ENCODE measurements at regions of chr12 and their contacts with region 1.

Region 1: DNA sequence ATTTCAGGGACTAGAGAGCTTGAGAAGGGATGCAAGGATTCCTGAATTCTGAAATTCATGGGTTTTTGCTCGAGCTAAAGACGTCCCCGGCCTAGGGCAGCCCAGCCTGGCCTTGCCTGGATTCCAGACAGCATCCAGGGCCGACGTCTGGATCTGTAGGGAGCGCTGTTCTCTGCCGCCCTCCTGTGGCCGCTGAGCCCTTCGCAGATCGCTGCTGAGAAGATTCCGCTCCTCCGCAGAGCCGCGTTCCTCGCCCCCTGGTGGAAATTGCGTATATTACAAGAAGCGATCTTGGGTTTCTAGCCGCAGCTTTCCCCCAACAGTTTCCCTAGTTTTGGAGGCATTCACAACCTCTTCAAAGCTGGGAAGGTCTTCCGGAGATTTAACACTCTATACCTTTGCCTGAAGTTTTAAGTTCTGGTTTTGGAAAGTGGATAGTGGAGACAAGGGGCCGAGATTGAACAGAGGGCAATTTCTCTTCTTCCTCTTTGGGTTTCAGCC is 5.1 kb downstream of the CISTR start:
- DNase-seq: peak; percentile 94
- H3K4me3 Mint-ChIP-seq: no peak overlapping the region
- H3K27ac Mint-ChIP-seq: no peak overlapping the region
- H3K4me1 Mint-ChIP-seq: peaks cover 5% of the 10 kb centered on the region
- H3K27me3 Mint-ChIP-seq: peaks cover 20% of the 10 kb centered on the region

Region 2: DNA sequence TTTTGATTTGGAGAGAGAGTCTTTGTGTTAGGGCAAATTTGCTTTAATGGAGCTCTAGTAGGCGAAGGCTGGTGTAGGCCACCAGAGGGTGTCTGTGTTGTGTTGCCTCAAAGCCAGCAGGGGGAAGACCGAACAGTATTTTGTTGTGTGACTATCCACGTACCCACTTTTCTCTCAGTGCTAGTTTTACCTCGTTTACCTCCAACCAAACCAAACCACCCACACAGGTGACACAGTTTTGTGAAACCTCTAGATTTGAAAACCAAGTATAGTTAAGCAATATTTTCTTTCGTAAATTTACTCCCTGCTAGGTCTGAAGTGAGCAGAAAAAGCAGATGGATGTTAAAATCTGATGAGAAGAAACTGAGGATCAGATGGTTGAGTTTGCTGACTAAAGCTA is 203.1 kb before region 1 on chr12:
- CTCF ChIA-PET with region 1: interaction called, 41 read pairs
- intact Hi-C with region 1: loop called (anchors 1 kb)
- DNase-seq: peak; percentile 77
- H3K4me3 Mint-ChIP-seq: no peak overlapping the region
- H3K27ac Mint-ChIP-seq: peak overlapping the region; percentile 26
- H3K4me1 Mint-ChIP-seq: peaks cover 13% of the 10 kb centered on the region
- H3K27me3 Mint-ChIP-seq: no peaks in the 10 kb centered on the region

Region 3: GRCh38 chr12:53696285-53696654 is 50.4 kb before region 1 on chr12:
- CTCF ChIA-PET with region 1: interaction called, 141 read pairs
- intact Hi-C with region 1: no loop called
- DNase-seq: peak; percentile 12
- H3K4me3 Mint-ChIP-seq: no peak overlapping the region
- H3K27ac Mint-ChIP-seq: no peak overlapping the region
- H3K4me1 Mint-ChIP-seq: peaks cover 26% of the 10 kb centered on the region
- H3K27me3 Mint-ChIP-seq: peaks cover 72% of the 10 kb centered on the region

Region 4: GRCh38 chr12:53717319-53717718 is 29.3 kb before region 1 on chr12:
- CTCF ChIA-PET with region 1: interaction called, 40 read pairs
- intact Hi-C with region 1: no loop called
- DNase-seq: no peak
- H3K4me3 Mint-ChIP-seq: no peak overlapping the region
- H3K27ac Mint-ChIP-seq: no peak overlapping the region
- H3K4me1 Mint-ChIP-seq: no peaks in the 10 kb centered on the region
- H3K27me3 Mint-ChIP-seq: no peaks in the 10 kb centered on the region

Region 5: DNA sequence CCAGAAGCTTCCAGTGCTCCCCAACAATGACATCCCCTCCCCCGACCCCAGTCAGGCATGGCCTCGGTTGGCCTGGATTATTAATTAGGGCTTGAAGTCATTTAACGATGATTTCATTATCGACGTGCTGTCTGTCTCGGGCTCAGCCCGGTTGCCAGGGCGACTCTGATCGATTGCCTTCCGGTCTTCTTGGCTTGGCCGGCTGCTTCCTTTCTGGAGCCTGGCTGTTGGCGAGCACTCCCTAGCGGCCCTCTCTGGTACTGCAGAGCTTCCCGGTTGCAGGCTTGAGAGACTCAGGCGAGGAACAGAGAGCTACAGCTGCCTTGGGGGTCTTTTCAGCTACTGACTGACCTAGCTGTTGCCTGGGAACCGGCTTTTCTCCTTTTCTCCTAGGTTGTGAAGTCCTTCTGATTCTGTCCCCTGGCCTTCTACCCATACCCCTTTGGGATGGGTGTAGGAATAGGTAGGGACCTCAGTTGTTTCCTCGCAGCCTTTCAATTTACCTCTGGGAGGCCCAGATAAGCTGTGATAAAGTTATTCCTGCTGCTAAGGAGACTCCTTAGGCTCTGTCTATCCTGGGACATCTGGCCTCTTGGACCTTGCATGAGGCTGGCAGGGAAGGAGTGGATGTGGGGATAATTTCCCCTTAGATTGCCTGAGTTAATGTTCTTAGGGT is 10.6 kb after region 1 on chr12:
- CTCF ChIA-PET with region 1: interaction called, 98 read pairs
- intact Hi-C with region 1: loop called (anchors 1 kb)
- DNase-seq: peak; percentile 92
- H3K4me3 Mint-ChIP-seq: peak overlapping the region; percentile 44
- H3K27ac Mint-ChIP-seq: no peak overlapping the region
- H3K4me1 Mint-ChIP-seq: peaks cover 7% of the 10 kb centered on the region
- H3K27me3 Mint-ChIP-seq: peaks cover 28% of the 10 kb centered on the region

Measured in activated naive CD4-positive, alpha-beta T cell treated with anti-CD3 and anti-CD28 coated beads for 36 hours (primary cell).